ENCODE measurements at regions of chr17 and their contacts with region 1.

Region 1: GRCh38 chr17:67082107-67082506 is 37.8 kb downstream of the CACNG1 start:
- DNase-seq: peak; percentile 26
- ATAC-seq: peak; percentile 90
- H3K4me3 ChIP-seq: no peak overlapping the region
- H3K27ac ChIP-seq: no peak overlapping the region
- H3K4me1 ChIP-seq: peaks cover 15% of the 10 kb centered on the region
- H3K27me3 ChIP-seq: no peaks in the 10 kb centered on the region
- CTCF ChIP-seq: peak; percentile 33 to 51 (median 43); a peak in 5 of 6 replicates
- EP300 ChIP-seq: 0 out of 4 replicates have a peak, but pooled peaks of 1 of the 2 experiments have one; percentile 37
- POLR2A ChIP-seq: no peak
- RAD21 ChIP-seq: peak; percentile 80

Region 2: GRCh38 chr17:66855204-66855603 is 226.9 kb before region 1 on chr17:
- CTCF ChIA-PET with region 1: no interaction called
- POLR2A ChIA-PET with region 1: no interaction called
- RAD21 ChIA-PET with region 1: no interaction called
- SMC1A ChIA-PET with region 1: interaction called, 3 read pairs
- in situ Hi-C with region 1: no loop called
- intact Hi-C with region 1: loop called (anchors 5 kb)
- DNase-seq: no peak
- ATAC-seq: no peak
- H3K4me3 ChIP-seq: no peak overlapping the region
- H3K27ac ChIP-seq: no peak overlapping the region
- H3K4me1 ChIP-seq: no peaks in the 10 kb centered on the region
- H3K27me3 ChIP-seq: no peaks in the 10 kb centered on the region
- CTCF ChIP-seq: peak in 2 of 3 experiments; percentile 26 to 35; a peak in 3 of 6 replicates
- EP300 ChIP-seq: no peak
- POLR2A ChIP-seq: no peak
- RAD21 ChIP-seq: no peak

Region 3: GRCh38 chr17:66981983-66982508 is 100.1 kb before region 1 on chr17:
- CTCF ChIA-PET with region 1: interaction called, 18 read pairs
- POLR2A ChIA-PET with region 1: no interaction called
- RAD21 ChIA-PET with region 1: interaction called, 5 read pairs
- SMC1A ChIA-PET with region 1: interaction called, 4 read pairs
- in situ Hi-C with region 1: no loop called
- intact Hi-C with region 1: no loop called
- DNase-seq: no peak
- ATAC-seq: no peak
- H3K4me3 ChIP-seq: no peak overlapping the region
- H3K27ac ChIP-seq: no peak overlapping the region
- H3K4me1 ChIP-seq: peaks cover 17% of the 10 kb centered on the region
- H3K27me3 ChIP-seq: no peaks in the 10 kb centered on the region; a peak in 1 of 4 replicates
- CTCF ChIP-seq: no peak
- EP300 ChIP-seq: no peak
- POLR2A ChIP-seq: no peak
- RAD21 ChIP-seq: no peak

Region 4: DNA sequence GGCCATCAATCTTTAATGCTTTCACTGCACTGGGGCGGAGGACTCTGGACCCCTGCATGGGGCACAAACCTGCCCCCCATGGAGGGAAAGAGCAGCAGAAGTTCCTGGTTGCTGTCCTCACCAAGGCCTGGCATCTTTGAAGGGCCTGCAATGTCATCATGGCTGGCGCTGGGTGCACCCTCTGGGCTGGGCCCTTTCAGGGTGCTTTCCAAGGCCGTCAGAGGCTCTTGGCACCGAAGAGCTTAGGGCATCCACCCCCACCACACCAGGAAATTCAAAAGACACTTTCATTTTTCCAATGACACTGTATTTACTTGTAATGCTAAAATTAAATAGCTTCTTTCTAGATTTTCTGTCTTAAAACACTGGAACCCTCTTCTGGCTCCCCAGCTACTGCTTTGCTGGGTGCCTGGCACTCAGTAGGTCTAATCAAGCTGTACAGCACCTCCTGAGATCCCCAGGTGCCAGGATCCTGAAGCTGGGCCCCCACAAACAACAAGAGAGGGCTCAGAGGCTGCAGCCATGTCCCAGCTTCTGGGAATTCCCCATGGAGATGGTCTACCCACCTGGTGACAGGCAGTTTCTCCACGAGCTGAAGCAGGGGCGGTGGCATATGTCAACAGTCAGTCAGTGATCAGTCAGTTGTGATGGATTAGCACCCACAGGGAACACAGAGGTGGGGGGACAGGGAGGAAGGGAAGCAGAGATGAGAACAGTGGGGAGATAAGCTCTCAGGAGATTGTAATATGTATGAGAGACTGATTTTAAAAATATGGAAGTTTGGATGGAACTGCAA is 39.8 kb before region 1 on chr17:
- CTCF ChIA-PET with region 1: interaction called, 9 read pairs
- POLR2A ChIA-PET with region 1: interaction called, 4 read pairs
- RAD21 ChIA-PET with region 1: interaction called, 14 read pairs
- SMC1A ChIA-PET with region 1: interaction called, 13 read pairs
- in situ Hi-C with region 1: no loop called
- intact Hi-C with region 1: no loop called
- DNase-seq: no peak
- ATAC-seq: peak; percentile 78
- H3K4me3 ChIP-seq: no peak overlapping the region
- H3K27ac ChIP-seq: no peak overlapping the region
- H3K4me1 ChIP-seq: no peaks in the 10 kb centered on the region
- H3K27me3 ChIP-seq: no peaks in the 10 kb centered on the region
- CTCF ChIP-seq: no peak
- EP300 ChIP-seq: no peak
- POLR2A ChIP-seq: no peak
- RAD21 ChIP-seq: no peak